ENCODE measurements at regions of chr17 and their contacts with region 1.

Region 1: DNA sequence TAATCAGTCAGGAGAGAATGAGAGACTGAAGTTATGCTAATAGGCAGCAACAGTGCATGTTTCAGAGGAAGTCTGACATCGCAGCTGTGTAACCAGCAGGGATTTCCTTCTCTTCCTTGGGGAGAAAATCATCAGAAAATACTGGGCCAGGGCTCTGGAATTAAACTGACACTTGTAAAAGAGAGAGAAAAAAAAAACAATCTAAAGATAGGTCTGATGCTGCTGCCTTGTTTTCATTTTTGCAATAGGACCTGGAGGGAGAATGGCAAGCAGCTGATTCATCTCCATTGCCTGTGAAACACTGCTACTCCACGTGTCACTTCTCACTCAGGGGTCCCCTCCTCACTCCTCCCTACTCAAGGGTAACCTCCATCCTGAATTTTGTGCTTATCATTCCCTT is 17.7 kb upstream of the CORO6 start:
- DNase-seq: no peak
- ATAC-seq: no peak
- H3K4me3 ChIP-seq: no peak overlapping the region
- H3K27ac ChIP-seq: no peak overlapping the region
- H3K4me1 ChIP-seq: peaks cover 21% of the 10 kb centered on the region
- H3K27me3 ChIP-seq: no peaks in the 10 kb centered on the region
- CTCF ChIP-seq: no peak
- EP300 ChIP-seq: no peak
- POLR2A ChIP-seq: no peak
- RAD21 ChIP-seq: no peak

Region 2: GRCh38 chr17:29753845-29754439 is 113.5 kb after region 1 on chr17:
- CTCF ChIA-PET with region 1: no interaction called
- POLR2A ChIA-PET with region 1: no interaction called
- in situ Hi-C with region 1: no loop called
- intact Hi-C with region 1: no loop called
- DNase-seq: no peak
- ATAC-seq: no peak
- H3K4me3 ChIP-seq: no peak overlapping the region
- H3K27ac ChIP-seq: no peak overlapping the region
- H3K4me1 ChIP-seq: 0 out of 2 replicates have a peak, but pooled peaks cover 5% of the 10 kb centered on the region
- H3K27me3 ChIP-seq: no peaks in the 10 kb centered on the region
- CTCF ChIP-seq: no peak
- EP300 ChIP-seq: no peak
- POLR2A ChIP-seq: no peak
- RAD21 ChIP-seq: no peak

Region 3: GRCh38 chr17:29777663-29778062 is 137.2 kb after region 1 on chr17:
- CTCF ChIA-PET with region 1: interaction called, 34 read pairs
- POLR2A ChIA-PET with region 1: no interaction called
- in situ Hi-C with region 1: no loop called
- intact Hi-C with region 1: loop called (anchors 1 kb)
- DNase-seq: peak; percentile 9
- ATAC-seq: 0 out of 3 replicates have a peak, but pooled peaks have one; percentile 28
- H3K4me3 ChIP-seq: no peak overlapping the region
- H3K27ac ChIP-seq: peak overlapping the region; percentile 24
- H3K4me1 ChIP-seq: peaks cover 10% of the 10 kb centered on the region
- H3K27me3 ChIP-seq: no peaks in the 10 kb centered on the region
- CTCF ChIP-seq: no peak
- EP300 ChIP-seq: no peak
- POLR2A ChIP-seq: no peak
- RAD21 ChIP-seq: no peak